Heart left ventricle (tissue), 16 donors: ENCODE measurements at regions of chr4 and their contacts with region 1.

Region 1: GRCh38 chr4:186015212-186015785 is 53.7 kb upstream of the TLR3 start:
- DNase-seq: peak in 3 of 5 donors; percentile 39 to 74 (median 61)
- ATAC-seq: peak; percentile 63 to 85 (median 81)
- H3K4me3 ChIP-seq: peak overlapping the region in 2 of 12 donors; percentile 19 to 20
- H3K27ac ChIP-seq: peak overlapping the region in 10 of 12 donors; percentile 27 to 83 (median 73)
- H3K4me1 ChIP-seq: peaks cover 0 to 20% (median 2%) of the 10 kb centered on the region in 12 donors
- H3K27me3 ChIP-seq: no peaks in the 10 kb centered on the region
- CTCF ChIP-seq: peak in 5 of 12 donors; percentile 10 to 38 (median 19)
- POLR2A ChIP-seq: no peak

Region 2: DNA sequence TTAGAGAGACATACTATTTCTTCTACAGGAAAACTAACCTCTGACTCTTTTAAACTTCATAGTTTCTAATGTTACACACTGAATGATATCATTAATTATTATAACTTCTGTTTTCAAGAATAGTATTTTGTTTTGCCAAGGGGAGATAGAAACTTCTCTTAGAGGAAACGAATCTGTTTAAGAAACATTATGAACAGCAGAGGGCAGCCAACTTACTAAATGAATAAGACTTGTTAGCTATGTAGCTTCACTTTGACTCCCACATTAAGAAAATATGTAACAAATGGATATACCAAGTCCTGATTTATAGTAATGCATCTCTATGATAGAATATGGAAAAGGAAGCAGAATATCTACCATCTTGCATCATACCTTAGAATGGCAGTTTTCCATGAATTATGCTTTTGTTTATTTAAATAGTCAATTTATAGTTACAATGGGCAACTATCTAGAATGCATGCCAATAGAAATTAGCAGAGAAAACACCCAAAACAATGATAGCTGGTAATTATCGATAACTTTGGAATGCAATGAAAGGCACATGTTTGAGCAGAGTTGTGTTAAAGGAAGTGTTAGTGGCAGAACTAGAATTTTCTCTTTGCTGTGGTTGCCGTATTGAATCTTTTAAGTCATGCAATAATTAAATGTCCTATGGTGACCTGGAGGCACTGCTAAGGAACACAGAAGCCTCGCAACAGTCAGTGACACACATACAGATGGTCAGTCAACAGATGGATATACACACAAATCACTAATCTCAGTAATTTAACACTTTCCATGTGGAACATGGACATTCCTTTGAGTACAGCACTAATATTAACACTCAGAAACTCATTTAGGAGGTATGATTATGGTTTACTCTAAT is 374.3 kb before region 1 on chr4:
- intact Hi-C with region 1: loop called in 8 of 10 experiments (anchors 2 to 5 kb)
- DNase-seq: no peak
- ATAC-seq: no peak
- H3K4me3 ChIP-seq: no peak overlapping the region
- H3K27ac ChIP-seq: peak overlapping the region in 2 of 12 donors; percentile 17 to 63
- H3K4me1 ChIP-seq: peaks cover 0 to 14% (median 1%) of the 10 kb centered on the region in 12 donors
- H3K27me3 ChIP-seq: peaks cover 0 to 5% (median 0%) of the 10 kb centered on the region in 9 donors
- CTCF ChIP-seq: peak in 11 of 12 donors; percentile 31 to 69 (median 52)
- POLR2A ChIP-seq: no peak

Region 3: DNA sequence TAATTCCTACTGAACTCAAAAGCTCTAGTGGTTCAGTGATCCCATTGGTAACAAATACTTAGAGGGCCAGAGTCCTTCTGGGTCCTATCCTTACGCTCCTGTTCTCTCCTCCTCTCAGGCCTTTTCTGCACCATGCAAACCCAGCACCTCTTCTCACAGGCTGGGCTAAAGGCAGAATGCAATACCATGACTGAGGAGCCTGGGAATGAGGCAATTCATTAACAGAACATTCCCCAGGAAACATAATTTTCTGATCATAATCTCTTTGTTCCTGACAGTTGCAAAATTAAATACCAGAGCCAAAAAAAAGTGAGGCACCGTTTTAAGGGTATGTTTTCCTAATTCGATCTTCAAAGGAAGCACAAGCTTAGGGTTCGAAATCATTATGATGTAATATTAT is 212.3 kb before region 1 on chr4:
- intact Hi-C with region 1: loop called in 4 of 10 experiments (anchors 5 to 10 kb)
- DNase-seq: no peak
- ATAC-seq: no peak
- H3K4me3 ChIP-seq: peak overlapping the region in 8 of 12 donors; percentile 1 to 61 (median 48)
- H3K27ac ChIP-seq: peak overlapping the region; percentile 13 to 87 (median 66)
- H3K4me1 ChIP-seq: peaks cover 0 to 48% (median 5%) of the 10 kb centered on the region in 12 donors
- H3K27me3 ChIP-seq: no peaks in the 10 kb centered on the region
- CTCF ChIP-seq: no peak
- POLR2A ChIP-seq: no peak

Region 4: DNA sequence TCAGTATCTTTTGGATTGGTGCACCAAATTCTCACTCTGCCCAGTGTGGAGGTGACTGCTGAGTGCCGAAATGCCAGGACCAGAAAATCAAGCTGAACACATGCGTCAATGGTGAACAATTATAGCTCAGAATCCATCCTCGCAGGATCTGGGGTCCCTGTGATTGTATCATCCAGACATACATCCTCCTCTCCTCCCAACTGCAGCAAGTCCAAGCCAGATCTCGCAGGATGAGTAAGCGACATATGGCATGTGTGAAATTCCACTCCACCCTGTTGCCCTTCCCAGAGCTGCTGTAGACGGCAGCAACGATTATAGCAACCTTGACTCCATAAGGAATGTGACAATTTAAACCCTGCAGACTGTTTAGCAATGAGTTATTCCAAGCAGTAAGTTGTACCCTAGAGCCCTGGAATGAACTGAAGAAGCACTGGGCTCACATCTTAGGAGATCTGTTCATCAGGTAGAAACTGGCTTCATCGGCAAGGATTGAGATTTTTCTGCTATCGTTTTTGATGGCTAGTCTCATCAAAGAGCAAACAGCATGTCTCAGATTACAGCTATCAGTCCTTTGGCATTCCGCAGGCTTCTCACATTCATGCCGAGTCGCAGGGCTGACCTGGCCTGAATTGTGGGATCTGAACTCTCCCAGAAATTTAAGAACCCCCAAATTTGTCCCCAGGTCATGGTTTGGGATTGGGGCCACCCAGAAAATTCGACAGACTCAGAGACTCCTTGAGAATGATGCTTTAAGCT is 167.8 kb before region 1 on chr4:
- intact Hi-C with region 1: loop called in 2 of 10 experiments (anchors 5 to 10 kb)
- DNase-seq: peak; percentile 68 to 88 (median 79)
- ATAC-seq: peak; percentile 87 to 92 (median 90)
- H3K4me3 ChIP-seq: no peak overlapping the region
- H3K27ac ChIP-seq: peak overlapping the region; percentile 52 to 90 (median 78)
- H3K4me1 ChIP-seq: peaks cover 0 to 37% (median 9%) of the 10 kb centered on the region in 12 donors
- H3K27me3 ChIP-seq: no peaks in the 10 kb centered on the region
- CTCF ChIP-seq: no peak
- POLR2A ChIP-seq: no peak

Region 5: DNA sequence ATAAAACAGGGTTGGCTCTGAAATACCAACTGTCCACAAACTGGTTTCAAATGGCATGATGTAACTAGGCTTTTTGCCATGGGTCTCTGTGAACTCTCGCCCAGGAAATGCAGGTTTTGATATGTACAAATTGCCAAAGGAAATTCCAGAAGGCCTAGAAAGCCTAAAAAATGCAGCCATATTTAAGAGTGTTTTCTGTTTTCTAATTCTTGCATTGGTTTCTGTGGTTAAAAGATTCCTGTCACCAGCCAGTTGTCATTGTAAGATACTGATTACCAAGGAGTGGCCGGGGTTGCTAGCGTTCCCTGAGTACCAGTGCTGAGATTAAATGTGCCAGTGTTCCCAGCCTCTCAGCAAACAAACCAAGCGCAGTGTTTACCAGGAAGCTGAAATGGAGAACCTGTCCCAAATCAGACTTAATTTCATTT is 149.4 kb before region 1 on chr4:
- intact Hi-C with region 1: loop called in 3 of 10 experiments (anchors 5 to 10 kb)
- DNase-seq: peak in 2 of 5 donors; percentile 39 to 61
- ATAC-seq: peak; percentile 62 to 79 (median 72)
- H3K4me3 ChIP-seq: no peak overlapping the region
- H3K27ac ChIP-seq: peak overlapping the region; percentile 56 to 94 (median 77)
- H3K4me1 ChIP-seq: peaks cover 0 to 59% (median 7%) of the 10 kb centered on the region in 12 donors
- H3K27me3 ChIP-seq: no peaks in the 10 kb centered on the region
- CTCF ChIP-seq: no peak
- POLR2A ChIP-seq: no peak

Region 6: DNA sequence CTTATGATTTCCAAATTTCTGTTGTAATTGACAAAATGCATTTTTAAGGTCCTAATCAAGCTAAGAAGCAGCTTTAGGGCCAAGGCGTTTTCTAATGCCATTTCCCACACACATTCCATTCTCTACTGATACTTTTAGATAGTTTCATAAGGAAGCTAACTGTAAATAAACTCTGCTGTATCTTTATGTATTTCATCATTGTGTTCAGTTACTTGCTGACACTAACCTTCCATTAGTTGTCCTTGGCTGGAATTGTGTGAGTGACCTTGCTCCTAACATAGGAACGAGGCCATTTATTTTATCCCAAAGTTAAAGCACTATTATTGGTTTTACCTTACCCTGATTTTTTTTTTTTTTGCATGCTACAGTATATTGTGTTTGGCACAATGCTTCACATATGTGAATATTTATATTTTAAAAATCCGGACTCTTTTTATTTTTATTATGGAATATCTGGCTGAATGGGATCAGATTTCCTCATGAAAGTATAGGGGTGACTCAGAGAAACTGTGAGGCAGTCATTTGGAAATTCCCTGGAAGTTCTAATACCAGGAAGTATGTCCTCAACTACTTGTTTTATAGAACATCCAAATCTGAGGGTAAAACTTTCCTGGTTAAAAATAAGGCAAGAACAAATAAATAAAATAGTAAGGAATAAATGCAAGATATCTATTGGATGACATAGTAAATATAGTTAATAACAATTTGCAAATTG is 140.6 kb before region 1 on chr4:
- intact Hi-C with region 1: loop called in 2 of 10 experiments (anchors 5 to 10 kb)
- DNase-seq: no peak
- ATAC-seq: peak in 1 of 4 donors; percentile 45
- H3K4me3 ChIP-seq: no peak overlapping the region
- H3K27ac ChIP-seq: peak overlapping the region in 2 of 12 donors; percentile 0 to 64
- H3K4me1 ChIP-seq: peaks cover 0 to 24% (median 3%) of the 10 kb centered on the region in 12 donors
- H3K27me3 ChIP-seq: no peaks in the 10 kb centered on the region
- CTCF ChIP-seq: no peak
- POLR2A ChIP-seq: no peak

Region 7: DNA sequence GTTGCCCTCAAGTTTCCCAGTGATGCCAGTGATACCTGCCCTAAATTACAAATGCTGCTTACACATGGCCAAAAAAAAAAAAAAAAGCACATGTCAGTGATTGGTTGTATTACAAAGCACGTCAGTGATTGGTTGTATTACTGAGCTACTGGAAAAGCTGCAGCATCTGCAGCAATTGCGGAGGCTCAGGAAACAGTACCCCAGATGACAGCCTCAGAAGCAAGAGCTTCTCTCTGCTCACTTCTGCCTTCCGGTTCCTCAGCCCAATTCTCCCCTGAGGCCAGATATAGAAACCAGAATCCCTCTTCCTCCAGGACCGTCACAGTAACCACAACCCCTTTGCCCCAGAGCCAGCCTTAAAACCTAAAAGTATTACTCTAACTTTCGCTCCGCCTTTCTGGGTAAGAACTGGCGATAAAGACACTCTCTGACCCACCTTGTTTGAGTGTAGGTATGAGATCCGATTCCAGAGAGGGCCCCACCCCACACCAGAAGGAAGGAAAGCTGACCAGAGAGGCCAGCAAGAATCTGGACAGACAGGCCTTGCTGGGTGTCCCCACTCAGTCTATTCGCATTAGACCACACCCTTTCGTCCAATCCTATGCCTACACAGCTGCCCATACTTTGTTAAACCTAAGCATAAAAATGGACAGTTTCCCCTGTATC is 118.3 kb before region 1 on chr4:
- intact Hi-C with region 1: loop called in 3 of 10 experiments (anchors 5 to 10 kb)
- DNase-seq: no peak
- ATAC-seq: no peak
- H3K4me3 ChIP-seq: no peak overlapping the region
- H3K27ac ChIP-seq: no peak overlapping the region
- H3K4me1 ChIP-seq: no peaks in the 10 kb centered on the region
- H3K27me3 ChIP-seq: no peaks in the 10 kb centered on the region
- CTCF ChIP-seq: no peak
- POLR2A ChIP-seq: no peak

Region 8: DNA sequence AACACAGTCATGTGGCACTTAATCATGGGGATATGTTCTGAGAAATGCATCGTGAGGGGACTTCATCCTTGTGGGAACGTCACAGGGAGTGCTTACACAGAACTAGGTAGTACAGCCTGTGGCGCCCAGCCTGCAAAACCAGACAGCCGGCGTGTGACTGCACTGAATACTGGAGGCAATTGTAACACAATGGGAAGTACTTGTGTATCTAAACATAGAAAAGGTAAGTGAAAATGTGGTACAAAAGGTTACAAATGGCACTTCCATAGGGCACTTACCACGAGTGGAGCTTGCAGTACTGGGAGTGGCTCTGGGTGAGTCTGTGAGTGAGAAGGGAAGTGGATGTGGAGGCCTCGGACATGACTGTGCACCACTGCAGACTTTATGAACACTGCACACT is 58.9 kb after region 1 on chr4:
- intact Hi-C with region 1: no loop called
- DNase-seq: no peak
- ATAC-seq: peak in 2 of 4 donors; percentile 28 to 61
- H3K4me3 ChIP-seq: no peak overlapping the region
- H3K27ac ChIP-seq: no peak overlapping the region
- H3K4me1 ChIP-seq: peaks cover 0 to 13% (median 1%) of the 10 kb centered on the region in 12 donors
- H3K27me3 ChIP-seq: no peaks in the 10 kb centered on the region
- CTCF ChIP-seq: no peak
- POLR2A ChIP-seq: no peak

Region 9: GRCh38 chr4:186240848-186241491 is 225.7 kb after region 1 on chr4:
- intact Hi-C with region 1: no loop called
- DNase-seq: no peak
- ATAC-seq: peak in 2 of 4 donors; percentile 13 to 61
- H3K4me3 ChIP-seq: no peak overlapping the region
- H3K27ac ChIP-seq: no peak overlapping the region
- H3K4me1 ChIP-seq: peaks cover 0 to 6% (median 0%) of the 10 kb centered on the region in 12 donors
- H3K27me3 ChIP-seq: no peaks in the 10 kb centered on the region
- CTCF ChIP-seq: no peak
- POLR2A ChIP-seq: no peak